ENCODE measurements at regions of chr6 and their contacts with region 1.

Region 1: DNA sequence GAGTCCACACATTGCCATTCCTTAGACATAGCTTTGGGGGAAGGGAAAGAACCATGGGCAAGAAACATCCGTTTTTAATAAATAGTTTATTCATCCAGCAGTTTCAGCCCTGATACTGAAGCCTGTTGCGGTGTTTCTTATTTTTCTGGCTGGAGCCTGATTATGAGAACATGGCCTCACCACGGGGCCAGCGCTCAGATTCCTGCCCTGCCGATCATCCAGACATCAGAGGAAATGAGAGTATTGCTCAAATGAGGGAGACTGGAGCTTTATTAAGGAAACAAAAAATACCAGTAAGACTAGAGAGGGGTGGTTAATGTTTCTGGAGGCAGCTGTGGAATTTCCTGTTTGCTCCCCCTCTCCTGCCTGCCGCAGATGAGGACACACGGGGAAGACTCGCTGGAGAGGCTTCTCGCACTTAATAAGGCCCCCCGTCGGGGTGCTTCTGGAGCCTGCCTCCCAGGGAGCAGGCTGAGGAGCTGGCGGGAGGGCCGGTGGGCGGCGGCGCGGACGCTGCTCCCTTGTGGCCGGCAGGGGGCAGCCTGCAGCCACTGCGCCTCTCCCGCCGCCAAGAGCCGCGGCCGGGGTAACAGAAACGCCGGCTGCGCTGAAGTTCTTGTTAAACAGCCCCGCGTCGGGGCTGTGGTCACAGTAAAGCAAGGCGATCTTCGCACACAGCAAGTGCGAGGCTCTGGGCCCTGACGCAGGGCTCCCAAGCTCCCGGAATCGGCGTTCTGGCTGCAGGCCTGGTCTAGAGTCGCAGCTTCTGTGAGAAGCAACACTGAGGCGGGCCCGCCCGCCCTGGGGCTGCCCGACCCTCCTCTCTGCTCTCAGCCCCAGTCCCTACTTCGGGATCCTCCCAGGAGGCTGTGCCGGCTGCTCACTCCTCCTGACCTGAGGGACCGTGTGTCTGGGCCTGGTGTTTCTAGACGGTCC is 17.5 kb downstream of the LEMD2 start:
- DNase-seq: peak; percentile 86
- ATAC-seq: peak; percentile 81
- H3K4me3 Mint-ChIP-seq: 0 out of 2 replicates have a peak overlapping the region, but pooled peaks have one; percentile 6
- H3K27ac Mint-ChIP-seq: peak overlapping the region; percentile 70
- H3K4me1 Mint-ChIP-seq: peaks cover 32% of the 10 kb centered on the region
- H3K27me3 Mint-ChIP-seq: no peaks in the 10 kb centered on the region
- CTCF ChIP-seq: peak; percentile 86

Region 2: GRCh38 chr6:33454009-33454946 is 317.1 kb before region 1 on chr6 and contains the start of gene ZBTB9:
- CTCF ChIA-PET with region 1: no interaction called
- POLR2A ChIA-PET with region 1: no interaction called
- DNase-seq: peak; percentile 93
- ATAC-seq: peak; percentile 97
- H3K4me3 Mint-ChIP-seq: peak within 1 kb of the TSS; percentile 92
- H3K27ac Mint-ChIP-seq: peak within 1 kb of the TSS; percentile 77
- H3K4me1 Mint-ChIP-seq: peaks cover 17% of the 10 kb centered on the region
- H3K27me3 Mint-ChIP-seq: peaks cover 4% of the 10 kb centered on the region
- CTCF ChIP-seq: no peak
- total RNA-seq, gene ZBTB9: 19.4 to 21.2 TPM (median 20.8 TPM) in 3 replicates

Region 3: GRCh38 chr6:33737267-33738026 is 34.0 kb before region 1 on chr6:
- CTCF ChIA-PET with region 1: interaction called, 13 read pairs
- POLR2A ChIA-PET with region 1: no interaction called
- DNase-seq: no peak
- ATAC-seq: no peak
- H3K4me3 Mint-ChIP-seq: no peak overlapping the region
- H3K27ac Mint-ChIP-seq: no peak overlapping the region
- H3K4me1 Mint-ChIP-seq: no peaks in the 10 kb centered on the region; the same call in none of the 2 replicates
- H3K27me3 Mint-ChIP-seq: no peaks in the 10 kb centered on the region
- CTCF ChIP-seq: no peak

Region 4: GRCh38 chr6:33788694-33789549 is 17.5 kb after region 1 on chr6 and contains the start of gene LEMD2:
- CTCF ChIA-PET with region 1: interaction called, 38 read pairs
- POLR2A ChIA-PET with region 1: no interaction called
- DNase-seq: peak; percentile 91
- ATAC-seq: peak; percentile 81
- H3K4me3 Mint-ChIP-seq: peak within 1 kb of the TSS; percentile 86
- H3K27ac Mint-ChIP-seq: peak within 1 kb of the TSS; percentile 86
- H3K4me1 Mint-ChIP-seq: peaks cover 81% of the 10 kb centered on the region
- H3K27me3 Mint-ChIP-seq: no peaks in the 10 kb centered on the region
- CTCF ChIP-seq: no peak
- total RNA-seq, gene LEMD2: 46.6 to 62.9 TPM (median 48.2 TPM) in 3 replicates

Region 5: DNA sequence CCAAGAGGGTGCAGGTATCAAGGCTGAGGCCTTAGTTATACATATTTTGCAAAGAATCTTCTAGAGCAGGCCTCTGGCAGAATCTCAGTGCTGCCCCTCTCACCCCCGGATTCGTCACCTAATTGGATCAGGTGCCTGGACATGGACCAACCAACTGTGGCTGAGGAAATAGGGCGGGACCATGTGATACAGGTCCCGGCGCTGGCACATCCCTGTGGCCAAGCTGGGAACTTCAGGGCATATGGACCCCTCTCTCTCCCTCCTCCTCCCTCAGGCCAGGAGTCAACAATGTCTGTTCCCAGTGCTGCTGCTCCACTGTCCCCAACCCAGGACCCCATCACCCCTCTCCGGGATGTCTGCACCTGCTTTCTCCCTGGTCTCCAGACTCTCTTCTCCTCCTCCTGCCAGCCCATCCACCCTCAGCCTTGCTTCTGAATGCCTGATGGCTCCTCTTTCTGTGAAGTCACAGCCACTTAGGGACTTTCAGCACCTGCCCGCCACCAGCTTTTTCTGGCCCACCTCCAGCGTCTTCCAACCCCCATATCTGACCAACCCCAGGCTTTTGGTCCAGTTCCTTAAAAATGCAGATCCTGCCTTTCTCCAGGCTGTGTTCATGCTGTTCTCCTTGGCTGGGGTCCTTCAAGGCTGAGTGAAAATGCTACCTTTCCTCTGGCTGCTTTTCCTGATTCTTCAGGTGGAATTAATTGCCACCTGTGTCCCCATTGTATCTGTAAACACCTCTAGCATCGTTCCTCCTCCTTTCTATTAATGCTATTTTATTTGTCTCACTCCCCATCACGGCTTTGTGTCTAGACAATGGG is 51.4 kb after region 1 on chr6:
- CTCF ChIA-PET with region 1: interaction called, 47 read pairs
- POLR2A ChIA-PET with region 1: no interaction called
- DNase-seq: peak; percentile 76
- ATAC-seq: peak; percentile 97
- H3K4me3 Mint-ChIP-seq: no peak overlapping the region
- H3K27ac Mint-ChIP-seq: no peak overlapping the region
- H3K4me1 Mint-ChIP-seq: peaks cover 23% of the 10 kb centered on the region
- H3K27me3 Mint-ChIP-seq: peaks cover under 1% of the 10 kb centered on the region; the same call in 1 of the 2 replicates
- CTCF ChIP-seq: peak; percentile 34; the same call in 1 of the 2 replicates

Region 6: DNA sequence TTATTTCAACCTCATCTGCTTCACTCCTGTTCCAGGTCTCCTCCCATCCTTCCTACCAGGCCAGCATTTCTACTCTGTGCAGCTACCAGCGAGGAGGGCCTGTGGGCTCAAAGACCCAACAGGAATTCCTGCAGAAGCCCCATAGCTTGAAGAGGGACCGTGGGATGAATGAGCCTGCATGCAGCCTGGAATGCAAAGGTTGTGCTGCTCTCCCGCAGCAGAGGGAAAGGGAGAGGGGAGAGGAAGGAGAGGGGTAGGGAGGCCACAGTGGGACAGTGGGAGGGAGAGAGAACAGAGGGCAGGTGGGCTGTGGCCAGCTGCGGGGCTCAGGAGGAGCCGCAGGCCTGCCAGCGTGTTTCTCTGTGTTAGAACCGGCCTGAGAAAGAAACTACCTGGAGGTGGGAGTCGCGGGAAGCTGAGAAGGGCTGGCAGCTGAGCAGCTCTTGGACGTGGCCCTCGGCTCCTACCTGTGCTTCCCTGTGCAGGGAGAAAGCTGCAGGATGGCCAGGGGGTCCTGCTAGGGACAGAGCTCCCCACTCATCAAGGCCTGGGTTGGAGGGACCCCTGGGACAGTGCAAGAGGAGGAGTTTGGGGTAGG is 98.5 kb after region 1 on chr6:
- CTCF ChIA-PET with region 1: interaction called, 10 read pairs
- POLR2A ChIA-PET with region 1: no interaction called
- DNase-seq: peak; percentile 36
- ATAC-seq: peak; percentile 78
- H3K4me3 Mint-ChIP-seq: no peak overlapping the region
- H3K27ac Mint-ChIP-seq: no peak overlapping the region
- H3K4me1 Mint-ChIP-seq: peaks cover 22% of the 10 kb centered on the region
- H3K27me3 Mint-ChIP-seq: no peaks in the 10 kb centered on the region
- CTCF ChIP-seq: no peak

Region 7: DNA sequence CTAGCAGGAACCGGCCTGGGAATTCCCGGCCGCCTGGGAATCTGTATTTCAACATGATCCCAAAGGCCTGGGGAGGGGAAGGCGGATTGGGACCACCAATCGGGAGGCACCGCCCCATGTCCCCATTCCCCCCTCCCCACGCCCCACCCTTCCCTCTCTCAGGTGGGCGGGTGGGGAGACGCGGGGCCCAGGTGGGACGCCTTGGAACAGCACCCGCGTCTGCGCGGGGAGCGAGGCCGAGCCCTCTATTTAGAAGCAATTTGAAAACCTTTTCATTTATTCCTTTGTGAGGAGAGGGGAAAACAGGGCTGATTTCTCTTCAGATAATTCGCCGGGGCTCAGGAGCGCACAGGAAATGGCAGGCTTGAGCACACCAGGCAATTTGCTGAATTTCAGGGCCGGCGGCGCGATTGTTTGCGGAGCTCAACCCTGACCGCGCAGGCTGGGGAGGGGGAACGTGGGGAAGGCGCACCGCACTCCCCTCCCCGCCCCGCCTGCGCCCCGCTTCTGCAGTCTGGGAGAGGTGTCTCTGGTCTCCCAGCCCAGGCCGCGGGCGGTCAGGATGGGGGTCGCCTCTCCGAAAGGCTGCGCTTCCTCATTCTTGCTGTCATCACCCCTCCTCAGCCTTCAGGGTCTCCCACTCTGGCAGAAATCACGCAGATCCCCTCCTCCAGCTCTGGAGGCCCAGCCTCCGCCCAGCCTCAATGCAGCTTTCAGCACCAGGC is 204.4 kb after region 1 on chr6:
- CTCF ChIA-PET with region 1: interaction called, 16 read pairs
- POLR2A ChIA-PET with region 1: no interaction called
- DNase-seq: peak; percentile 51
- ATAC-seq: peak; percentile 69
- H3K4me3 Mint-ChIP-seq: peak overlapping the region; percentile 68
- H3K27ac Mint-ChIP-seq: no peak overlapping the region
- H3K4me1 Mint-ChIP-seq: peaks cover 5% of the 10 kb centered on the region
- H3K27me3 Mint-ChIP-seq: peaks cover 52% of the 10 kb centered on the region
- CTCF ChIP-seq: no peak

Measured in WTC11 (cell line).